Adrenal gland (tissue), 19 donors: ENCODE measurements at regions of chr3 and their contacts with region 1.

Region 1: DNA sequence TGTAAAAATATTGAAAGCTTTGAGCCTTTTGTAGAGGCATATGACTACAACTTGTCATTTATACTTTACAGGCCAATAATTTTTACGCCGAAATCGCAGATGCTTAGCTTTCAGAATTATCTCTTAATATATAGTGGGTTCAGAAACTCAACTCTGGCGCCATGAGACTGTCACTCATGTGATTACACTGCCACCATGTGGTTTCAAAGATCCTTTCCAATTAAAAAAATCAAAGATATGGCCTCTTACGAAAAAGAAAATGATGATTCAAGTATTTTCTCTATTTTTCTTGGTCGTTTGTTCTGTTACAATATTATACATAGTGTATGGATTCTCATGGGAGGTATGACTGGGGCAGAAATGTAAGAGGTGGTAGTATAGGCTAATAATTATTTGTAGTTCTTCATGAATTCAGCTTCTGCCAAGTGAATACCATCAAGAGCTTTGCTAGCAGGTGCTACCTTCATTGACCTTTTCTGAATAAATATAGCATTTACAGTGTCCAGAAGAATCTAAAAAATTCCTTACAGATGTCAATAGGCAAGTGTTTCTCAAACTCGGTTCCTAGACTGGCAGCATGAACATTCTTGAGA is 751.7 kb upstream of the GOLIM4 start:
- DNase-seq: peak in 2 of 7 donors; percentile 2 to 13
- H3K4me3 ChIP-seq: no peak overlapping the region
- H3K27ac ChIP-seq: no peak overlapping the region
- H3K4me1 ChIP-seq: no peaks in the 10 kb centered on the region
- H3K27me3 ChIP-seq: no peaks in the 10 kb centered on the region
- CTCF ChIP-seq: peak in 5 of 6 experiments; percentile 28 to 55 (median 46)
- POLR2A ChIP-seq: no peak

Region 2: DNA sequence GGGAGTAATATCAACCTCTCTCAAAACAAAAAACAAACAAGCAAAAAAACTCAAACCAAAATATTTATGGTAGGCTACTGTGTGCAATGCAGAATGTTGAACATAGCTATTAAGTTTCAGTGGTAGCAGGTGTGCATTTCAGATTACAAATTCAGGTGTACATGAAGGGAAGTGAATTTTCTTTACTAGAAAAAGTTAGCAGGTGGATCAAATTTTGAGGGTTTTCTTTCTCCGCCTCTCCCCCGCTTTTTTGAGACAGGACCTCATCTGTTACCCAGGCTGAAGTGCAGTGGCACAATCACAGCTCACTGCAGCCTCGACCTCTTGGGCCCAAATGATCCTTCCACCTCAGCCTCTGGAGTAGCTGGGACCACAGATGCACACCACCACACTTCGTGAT is 641.9 kb before region 1 on chr3:
- intact Hi-C with region 1: loop called (anchors 5 kb)
- DNase-seq: no peak
- H3K4me3 ChIP-seq: no peak overlapping the region
- H3K27ac ChIP-seq: no peak overlapping the region
- H3K4me1 ChIP-seq: no peaks in the 10 kb centered on the region
- H3K27me3 ChIP-seq: peaks cover 4% of the 10 kb centered on the region
- CTCF ChIP-seq: no peak
- POLR2A ChIP-seq: no peak